CD4-positive, alpha-beta T cell (primary cell): ENCODE measurements at regions of chr17 and their contacts with region 1.

Region 1: GRCh38 chr17:41665566-41666236 is 23.0 kb upstream of the EIF1 start:
- DNase-seq: peak; percentile 75 to 95 (median 88)
- ATAC-seq: peak; percentile 80
- H3K4me3 ChIP-seq: peak overlapping the region; percentile 58
- H3K4me3 Mint-ChIP-seq: peak overlapping the region; percentile 87
- H3K27ac ChIP-seq: peak overlapping the region; percentile 98 to 99
- H3K27ac Mint-ChIP-seq: peak overlapping the region; percentile 90
- H3K4me1 ChIP-seq: peaks cover 42% of the 10 kb centered on the region
- H3K4me1 Mint-ChIP-seq: peaks cover 41% of the 10 kb centered on the region
- H3K27me3 ChIP-seq: no peaks in the 10 kb centered on the region
- H3K27me3 Mint-ChIP-seq: no peaks in the 10 kb centered on the region
- CTCF ChIP-seq: peak; percentile 99

Region 2: GRCh38 chr17:40362696-40363110 is 1303.0 kb before region 1 on chr17:
- CTCF ChIA-PET with region 1: interaction called, 3 read pairs
- POLR2A ChIA-PET with region 1: no interaction called
- intact Hi-C with region 1: loop called (anchors 1 to 5 kb)
- DNase-seq: peak; percentile 68 to 87 (median 74)
- ATAC-seq: peak; percentile 82
- H3K4me3 ChIP-seq: peak overlapping the region; percentile 36
- H3K4me3 Mint-ChIP-seq: peak overlapping the region; percentile 14
- H3K27ac ChIP-seq: no peak overlapping the region
- H3K27ac Mint-ChIP-seq: no peak overlapping the region
- H3K4me1 ChIP-seq: peaks cover 23% of the 10 kb centered on the region
- H3K4me1 Mint-ChIP-seq: peaks cover 16% of the 10 kb centered on the region
- H3K27me3 ChIP-seq: peaks cover 0 to 13% of the 10 kb centered on the region in 2 experiments
- H3K27me3 Mint-ChIP-seq: peaks cover 17% of the 10 kb centered on the region
- CTCF ChIP-seq: peak; percentile 56

Region 3: DNA sequence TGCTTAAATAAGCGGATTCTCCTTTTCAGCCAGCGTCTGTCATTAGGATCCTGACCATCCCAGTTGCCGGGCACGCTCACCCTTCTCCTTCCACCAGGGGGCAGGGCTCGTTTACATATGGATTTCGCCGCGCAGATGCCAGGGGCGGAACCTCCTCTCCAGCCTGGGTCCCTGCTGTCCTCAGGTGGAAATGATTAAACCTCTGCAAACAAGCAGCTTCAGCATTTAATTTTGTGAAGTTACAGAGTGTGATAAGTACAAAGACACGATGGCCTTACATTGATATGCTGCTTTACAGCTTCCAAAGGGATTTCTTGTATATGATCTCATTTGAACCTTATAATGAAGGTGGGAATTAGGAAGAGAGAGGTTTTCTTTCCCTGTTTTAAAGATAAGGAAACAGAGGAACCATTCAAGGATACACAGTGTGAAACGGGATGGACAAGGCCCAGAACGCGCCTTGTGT is 862.1 kb before region 1 on chr17:
- CTCF ChIA-PET with region 1: interaction called, 11 read pairs
- POLR2A ChIA-PET with region 1: interaction called, 4 read pairs
- intact Hi-C with region 1: loop called (anchors 1 kb)
- DNase-seq: peak; percentile 51 to 85 (median 66)
- ATAC-seq: peak; percentile 89
- H3K4me3 ChIP-seq: no peak overlapping the region
- H3K4me3 Mint-ChIP-seq: no peak overlapping the region
- H3K27ac ChIP-seq: no peak overlapping the region
- H3K27ac Mint-ChIP-seq: no peak overlapping the region
- H3K4me1 ChIP-seq: no peaks in the 10 kb centered on the region
- H3K4me1 Mint-ChIP-seq: peaks cover 4% of the 10 kb centered on the region
- H3K27me3 ChIP-seq: peaks cover 11 to 58% of the 10 kb centered on the region in 2 experiments
- H3K27me3 Mint-ChIP-seq: peaks cover 54% of the 10 kb centered on the region
- CTCF ChIP-seq: peak; percentile 91

Region 4: GRCh38 chr17:40909351-40909750 is 756.4 kb before region 1 on chr17:
- CTCF ChIA-PET with region 1: interaction called, 34 read pairs
- POLR2A ChIA-PET with region 1: no interaction called
- intact Hi-C with region 1: loop called (anchors 1 kb)
- DNase-seq: peak; percentile 38 to 85 (median 58)
- ATAC-seq: peak; percentile 91
- H3K4me3 ChIP-seq: no peak overlapping the region
- H3K4me3 Mint-ChIP-seq: no peak overlapping the region
- H3K27ac ChIP-seq: no peak overlapping the region
- H3K27ac Mint-ChIP-seq: no peak overlapping the region
- H3K4me1 ChIP-seq: no peaks in the 10 kb centered on the region
- H3K4me1 Mint-ChIP-seq: no peaks in the 10 kb centered on the region
- H3K27me3 ChIP-seq: peaks cover 2 to 25% of the 10 kb centered on the region in 2 experiments
- H3K27me3 Mint-ChIP-seq: peaks cover 59% of the 10 kb centered on the region
- CTCF ChIP-seq: peak; percentile 82

Region 5: GRCh38 chr17:41548844-41549595 is 116.7 kb before region 1 on chr17:
- CTCF ChIA-PET with region 1: interaction called, 27 read pairs
- POLR2A ChIA-PET with region 1: interaction called, 9 read pairs
- intact Hi-C with region 1: loop called (anchors 1 to 2 kb)
- DNase-seq: peak; percentile 73 to 91 (median 82)
- ATAC-seq: peak; percentile 85
- H3K4me3 ChIP-seq: peak overlapping the region; percentile 42
- H3K4me3 Mint-ChIP-seq: peak overlapping the region; percentile 2
- H3K27ac ChIP-seq: no peak overlapping the region
- H3K27ac Mint-ChIP-seq: peak overlapping the region; percentile 65
- H3K4me1 ChIP-seq: peaks cover 23% of the 10 kb centered on the region
- H3K4me1 Mint-ChIP-seq: peaks cover 9% of the 10 kb centered on the region
- H3K27me3 ChIP-seq: no peaks in the 10 kb centered on the region
- H3K27me3 Mint-ChIP-seq: peaks cover 15% of the 10 kb centered on the region
- CTCF ChIP-seq: peak; percentile 96

Region 6: DNA sequence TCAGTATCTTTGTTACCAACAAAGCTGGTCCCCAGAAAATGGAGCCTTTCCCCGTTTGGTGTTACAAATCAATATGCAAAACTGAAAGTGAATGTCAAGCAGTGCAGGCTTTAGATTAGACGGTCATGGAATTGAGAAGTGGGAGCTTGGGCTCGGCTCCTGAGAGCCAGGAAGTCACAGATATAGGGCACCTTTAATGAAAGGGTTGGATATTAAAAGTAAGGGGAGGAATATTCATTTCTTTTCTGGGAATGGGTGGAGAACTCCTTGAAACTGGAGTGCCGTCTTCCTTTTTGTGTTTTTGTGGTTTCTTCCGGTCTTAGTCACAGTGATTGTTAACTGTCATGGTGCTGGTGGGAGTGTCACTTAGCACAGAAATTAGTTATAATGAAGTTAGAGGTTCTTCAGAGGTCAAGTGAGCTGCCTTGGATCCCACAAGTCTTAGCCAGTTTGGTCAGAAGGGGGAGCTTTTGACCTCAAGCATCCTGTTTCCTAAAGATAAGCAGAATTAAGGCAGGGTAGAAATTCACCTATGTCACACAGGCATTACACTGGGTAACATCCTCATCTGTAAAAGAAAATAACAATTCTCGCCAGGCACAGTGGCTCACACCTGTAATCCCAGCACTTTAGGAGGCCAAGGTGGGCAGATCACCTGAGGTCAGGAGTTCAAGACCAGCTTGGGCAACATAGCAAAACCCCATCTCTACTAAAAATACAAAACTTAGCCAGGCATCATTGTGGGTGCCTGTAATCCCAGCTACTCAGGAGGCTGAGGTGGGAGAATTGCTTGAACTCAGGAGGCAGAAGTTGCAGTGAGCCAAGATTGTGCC is 13.4 kb after region 1 on chr17:
- CTCF ChIA-PET with region 1: interaction called, 28 read pairs
- POLR2A ChIA-PET with region 1: interaction called, 53 read pairs
- intact Hi-C with region 1: loop called in 1 of 2 experiments (anchors 2 kb)
- DNase-seq: peak in 12 of 14 experiments; percentile 18 to 94 (median 54)
- ATAC-seq: peak; percentile 91
- H3K4me3 ChIP-seq: peak overlapping the region; percentile 38
- H3K4me3 Mint-ChIP-seq: peak overlapping the region; percentile 83
- H3K27ac ChIP-seq: peak overlapping the region; percentile 73 to 74
- H3K27ac Mint-ChIP-seq: peak overlapping the region; percentile 87
- H3K4me1 ChIP-seq: peaks cover 40% of the 10 kb centered on the region
- H3K4me1 Mint-ChIP-seq: peaks cover 20% of the 10 kb centered on the region
- H3K27me3 ChIP-seq: no peaks in the 10 kb centered on the region
- H3K27me3 Mint-ChIP-seq: no peaks in the 10 kb centered on the region
- CTCF ChIP-seq: peak; percentile 28